ENCODE measurements at regions of chr17 and their contacts with region 1.

Region 1: GRCh38 chr17:34361478-34362061 is 1.5 kb downstream of the CCL1 start:
- DNase-seq: peak; percentile 88
- ATAC-seq: peak; percentile 92
- H3K4me3 Mint-ChIP-seq: no peak overlapping the region
- H3K27ac Mint-ChIP-seq: no peak overlapping the region
- H3K4me1 Mint-ChIP-seq: peaks cover 51% of the 10 kb centered on the region
- H3K27me3 Mint-ChIP-seq: peaks cover 23% of the 10 kb centered on the region

Region 2: DNA sequence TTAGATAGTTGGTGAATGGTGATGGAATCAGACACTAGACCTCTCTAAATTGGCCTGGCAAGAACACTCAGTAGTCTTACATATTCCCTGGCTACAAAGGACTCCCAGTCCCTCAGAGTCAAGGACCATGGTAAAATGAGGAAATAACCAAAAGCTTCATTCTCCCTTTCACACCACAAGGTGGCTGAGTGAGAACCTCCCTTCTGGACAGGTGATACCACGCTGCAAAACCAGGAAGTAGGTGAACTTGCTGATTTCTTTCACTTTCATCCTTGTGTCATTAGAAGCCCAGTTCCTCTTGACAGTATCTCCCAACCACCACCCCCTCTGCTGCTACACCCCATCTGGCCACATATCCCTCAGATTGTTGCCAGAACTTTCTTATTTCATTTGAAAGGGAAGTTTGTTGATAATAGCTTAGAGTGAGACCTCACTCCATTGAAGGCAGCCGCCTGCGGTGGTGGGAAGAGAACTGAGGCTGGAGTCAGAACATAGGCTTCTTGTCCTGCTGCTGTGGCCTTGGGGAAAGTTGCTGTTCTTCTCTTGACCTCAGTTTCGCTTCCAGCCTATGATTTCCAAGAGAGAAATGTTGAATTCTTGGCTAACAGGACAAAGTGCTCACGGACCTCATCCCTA is 397.1 kb before region 1 on chr17:
- CTCF ChIA-PET with region 1: interaction called, 11 read pairs
- POLR2A ChIA-PET with region 1: no interaction called
- DNase-seq: peak; percentile 66
- ATAC-seq: peak; percentile 85
- H3K4me3 Mint-ChIP-seq: peak overlapping the region; percentile 26
- H3K27ac Mint-ChIP-seq: peak overlapping the region; percentile 75
- H3K4me1 Mint-ChIP-seq: peaks cover 57% of the 10 kb centered on the region
- H3K27me3 Mint-ChIP-seq: peaks cover 12% of the 10 kb centered on the region

Region 3: GRCh38 chr17:34177642-34178041 is 183.9 kb before region 1 on chr17:
- CTCF ChIA-PET with region 1: interaction called, 53 read pairs
- POLR2A ChIA-PET with region 1: no interaction called
- DNase-seq: no peak
- ATAC-seq: no peak
- H3K4me3 Mint-ChIP-seq: no peak overlapping the region
- H3K27ac Mint-ChIP-seq: no peak overlapping the region
- H3K4me1 Mint-ChIP-seq: peaks cover 5% of the 10 kb centered on the region
- H3K27me3 Mint-ChIP-seq: peaks cover 16% of the 10 kb centered on the region

Region 4: DNA sequence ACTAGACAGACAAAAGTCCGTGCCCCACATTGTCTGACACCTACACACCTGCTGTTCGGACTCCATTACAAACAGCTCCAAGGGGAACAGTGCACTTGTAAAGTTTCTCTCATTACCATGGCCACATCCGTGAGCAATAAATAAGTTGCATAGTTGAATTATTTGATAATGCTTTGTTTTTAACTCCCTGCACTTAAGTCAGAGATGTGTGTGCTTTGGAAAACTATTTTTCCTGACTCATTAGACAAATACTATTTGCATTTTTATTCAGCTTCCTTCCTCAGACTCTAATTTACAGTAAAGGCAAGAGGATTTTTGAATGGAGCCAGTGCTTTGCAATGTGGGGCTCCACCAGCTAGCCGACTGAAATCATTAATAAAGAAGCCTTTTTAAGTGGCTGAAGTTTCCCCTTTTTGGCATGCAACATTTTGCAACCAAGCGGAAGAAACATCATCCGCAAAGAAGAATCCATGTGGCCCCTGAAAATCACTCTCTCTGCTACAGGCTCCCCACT is 113.0 kb before region 1 on chr17:
- CTCF ChIA-PET with region 1: interaction called, 12 read pairs
- POLR2A ChIA-PET with region 1: no interaction called
- DNase-seq: no peak
- ATAC-seq: no peak
- H3K4me3 Mint-ChIP-seq: no peak overlapping the region
- H3K27ac Mint-ChIP-seq: no peak overlapping the region
- H3K4me1 Mint-ChIP-seq: no peaks in the 10 kb centered on the region
- H3K27me3 Mint-ChIP-seq: peaks cover 14% of the 10 kb centered on the region

Region 5: GRCh38 chr17:34318474-34318873 is 43.1 kb before region 1 on chr17:
- CTCF ChIA-PET with region 1: interaction called, 42 read pairs
- POLR2A ChIA-PET with region 1: no interaction called
- DNase-seq: peak; percentile 27
- ATAC-seq: no peak
- H3K4me3 Mint-ChIP-seq: no peak overlapping the region
- H3K27ac Mint-ChIP-seq: no peak overlapping the region
- H3K4me1 Mint-ChIP-seq: no peaks in the 10 kb centered on the region
- H3K27me3 Mint-ChIP-seq: peaks cover 21% of the 10 kb centered on the region

Region 6: GRCh38 chr17:34386697-34387550 is 25.4 kb after region 1 on chr17:
- CTCF ChIA-PET with region 1: interaction called, 71 read pairs
- POLR2A ChIA-PET with region 1: no interaction called
- DNase-seq: no peak
- ATAC-seq: no peak
- H3K4me3 Mint-ChIP-seq: no peak overlapping the region
- H3K27ac Mint-ChIP-seq: no peak overlapping the region
- H3K4me1 Mint-ChIP-seq: peaks cover 56% of the 10 kb centered on the region
- H3K27me3 Mint-ChIP-seq: peaks cover 16% of the 10 kb centered on the region

Region 7: GRCh38 chr17:34420254-34420766 is 58.7 kb after region 1 on chr17:
- CTCF ChIA-PET with region 1: interaction called, 30 read pairs
- POLR2A ChIA-PET with region 1: no interaction called
- DNase-seq: peak; percentile 70
- ATAC-seq: peak; percentile 57
- H3K4me3 Mint-ChIP-seq: no peak overlapping the region
- H3K27ac Mint-ChIP-seq: no peak overlapping the region
- H3K4me1 Mint-ChIP-seq: no peaks in the 10 kb centered on the region
- H3K27me3 Mint-ChIP-seq: peaks cover 33% of the 10 kb centered on the region